RWPE1 (cell line): ENCODE measurements at regions of chr2 and their contacts with region 1.

Region 1: GRCh38 chr2:27291865-27292264 is 9.6 kb downstream of the TRIM54 start:
- DNase-seq: no peak
- H3K27ac ChIP-seq: no peak overlapping the region
- CTCF ChIP-seq: no peak

Region 2: GRCh38 chr2:27303093-27304025 is 11.5 kb after region 1 on chr2:
- CTCF ChIA-PET with region 1: interaction called, 12 read pairs
- POLR2A ChIA-PET with region 1: no interaction called
- DNase-seq: peak; percentile 72
- H3K27ac ChIP-seq: peak overlapping the region; percentile 31; the same call in 1 of the 2 replicates
- CTCF ChIP-seq: peak; percentile 89

Region 3: DNA sequence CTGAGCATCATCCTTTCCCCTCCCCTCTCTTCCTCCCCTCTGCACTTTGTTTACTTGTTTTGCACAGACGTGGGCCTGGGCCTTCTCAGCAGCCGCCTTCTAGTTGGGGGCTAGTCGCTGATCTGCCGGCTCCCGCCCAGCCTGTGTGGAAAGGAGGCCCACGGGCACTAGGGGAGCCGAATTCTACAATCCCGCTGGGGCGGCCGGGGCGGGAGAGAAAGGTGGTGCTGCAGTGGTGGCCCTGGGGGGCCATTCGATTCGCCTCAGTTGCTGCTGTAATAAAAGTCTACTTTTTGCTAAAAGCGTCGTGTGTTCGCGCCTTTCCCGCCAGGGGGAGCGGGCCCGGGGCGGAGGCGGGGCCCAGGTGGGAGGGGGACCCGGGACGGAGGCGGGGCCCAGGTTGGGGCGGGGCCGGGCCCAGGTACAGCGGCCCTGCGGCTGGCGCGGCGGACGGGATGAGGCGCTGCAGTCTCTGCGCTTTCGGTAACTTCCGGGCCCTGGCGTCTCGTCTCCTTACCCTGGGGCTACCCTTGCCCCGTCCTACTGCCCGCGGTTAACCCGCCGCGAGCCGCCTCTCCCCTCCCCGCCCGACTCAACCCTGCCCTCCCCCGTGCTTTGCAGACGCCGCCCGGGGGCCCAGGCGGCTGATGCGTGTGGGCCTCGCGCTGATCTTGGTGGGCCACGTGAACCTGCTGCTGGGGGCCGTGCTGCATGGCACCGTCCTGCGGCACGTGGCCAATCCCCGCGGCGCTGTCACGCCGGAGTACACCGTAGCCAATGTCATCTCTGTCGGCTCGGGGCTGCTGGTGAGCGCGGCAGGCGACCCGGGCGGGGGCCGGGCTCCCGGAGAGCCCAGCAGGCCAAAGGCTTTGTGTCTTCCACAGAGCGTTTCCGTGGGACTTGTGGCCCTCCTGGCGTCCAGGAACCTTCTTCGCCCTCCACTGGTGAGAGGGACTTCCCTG is 150.4 kb after region 1 on chr2 and contains the start of gene KRTCAP3:
- CTCF ChIA-PET with region 1: no interaction called
- POLR2A ChIA-PET with region 1: no interaction called
- DNase-seq: peak; percentile 92
- H3K27ac ChIP-seq: peak within 1 kb of the TSS; percentile 49
- CTCF ChIP-seq: peak; percentile 54

Region 4: DNA sequence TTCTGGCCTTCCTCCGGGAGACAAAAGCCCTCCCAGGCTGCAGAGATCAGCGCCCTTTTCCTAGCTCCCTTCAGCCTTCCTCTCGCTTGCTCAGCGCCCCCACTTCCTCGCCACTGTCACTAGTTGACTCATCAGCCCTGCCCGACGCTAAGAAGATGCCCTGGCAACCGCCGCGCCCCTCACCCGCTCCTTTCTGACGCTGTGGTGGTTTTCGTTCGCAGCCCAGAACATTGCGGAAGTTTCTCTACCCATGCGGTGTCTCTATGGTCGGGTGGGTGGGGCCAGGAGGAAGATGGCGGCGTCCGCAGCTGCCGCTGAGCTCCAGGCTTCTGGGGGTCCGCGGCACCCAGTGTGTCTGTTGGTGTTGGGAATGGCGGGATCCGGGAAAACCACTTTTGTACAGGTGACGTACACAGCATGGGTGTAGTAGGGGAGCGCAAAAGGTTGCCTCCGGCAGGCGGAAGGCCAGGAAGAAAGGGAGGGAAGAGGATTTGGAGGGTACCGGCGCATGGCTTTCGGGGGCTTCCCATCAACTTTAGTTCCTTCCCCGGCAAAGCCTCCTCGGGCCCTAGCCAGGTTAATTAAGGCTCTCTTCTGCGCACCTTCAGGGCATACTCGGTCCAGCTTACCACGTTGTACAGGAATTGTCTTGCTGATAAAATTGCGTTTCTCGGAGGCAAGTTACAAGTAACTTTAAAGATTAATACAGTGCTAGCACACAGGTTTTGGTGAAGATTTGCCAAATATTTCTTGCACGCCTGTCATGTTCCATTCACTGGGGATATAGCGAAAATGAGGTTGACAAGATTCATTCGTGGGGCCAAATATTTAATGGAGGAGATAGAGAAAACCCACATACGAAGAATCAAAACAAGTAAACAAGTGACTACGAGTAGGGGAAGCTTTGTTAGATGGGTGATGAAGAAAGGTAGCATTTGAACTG is 337.2 kb after region 1 on chr2 and contains the starts of genes CCDC121 and GPN1:
- CTCF ChIA-PET with region 1: no interaction called
- POLR2A ChIA-PET with region 1: no interaction called
- DNase-seq: peak; percentile 92
- H3K27ac ChIP-seq: peak within 1 kb of the TSS; percentile 94
- CTCF ChIP-seq: no peak